ENCODE measurements at regions of chr13 and their contacts with region 1.

Region 1: DNA sequence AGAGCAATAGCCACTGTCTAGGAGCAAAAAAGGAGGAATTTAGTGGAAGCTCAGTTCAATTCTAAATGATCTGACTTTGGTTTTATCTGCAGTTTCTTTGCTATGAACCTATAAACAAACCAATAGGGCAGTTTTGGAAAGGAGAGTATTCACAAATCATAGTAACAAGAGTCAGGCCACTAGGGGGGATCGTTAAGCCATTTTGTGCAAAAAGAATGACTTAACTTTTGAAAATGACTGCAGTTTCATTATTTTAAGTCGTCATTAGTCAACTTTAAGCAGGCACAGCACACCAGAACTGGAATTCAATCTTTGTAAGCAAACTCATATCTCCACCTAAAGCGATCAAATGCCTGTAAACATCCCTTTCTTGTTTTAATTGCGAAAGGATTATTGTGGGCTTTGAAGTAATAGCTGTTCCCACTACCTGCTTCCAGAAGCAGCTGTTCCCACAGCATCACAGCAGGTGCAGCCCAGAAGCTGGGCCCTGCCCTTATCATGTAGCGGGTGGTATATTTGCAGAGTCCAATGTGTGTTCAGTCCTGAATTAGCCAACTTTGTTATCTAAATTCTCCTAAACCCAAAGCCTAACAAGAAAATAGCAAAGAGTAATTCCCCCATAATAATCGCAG is 51.5 kb downstream of the SOX21 start:
- DNase-seq: no peak
- H3K4me3 ChIP-seq: no peak overlapping the region
- H3K27ac ChIP-seq: no peak overlapping the region
- H3K27me3 ChIP-seq: peaks cover 35% of the 10 kb centered on the region
- CTCF ChIP-seq: peak; percentile 57

Region 2: DNA sequence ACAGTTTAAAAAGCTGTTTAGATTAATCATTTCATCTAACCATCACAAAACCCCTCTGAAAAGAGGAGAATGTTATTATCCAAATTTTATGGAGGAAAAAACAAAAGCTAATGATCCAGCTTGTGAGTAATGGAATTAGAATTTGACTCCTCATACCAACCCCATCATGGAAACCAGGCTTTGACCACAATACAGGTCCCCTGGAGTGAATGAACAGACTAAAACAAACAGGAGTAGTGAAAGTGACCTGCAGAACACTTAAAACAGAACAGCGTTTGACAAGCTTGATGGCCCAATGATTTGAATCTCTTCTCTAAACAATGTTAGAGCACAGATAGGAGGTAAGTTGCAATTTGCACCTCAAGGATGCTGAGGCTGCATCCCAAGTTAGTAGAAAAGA is 411.3 kb before region 1 on chr13:
- CTCF ChIA-PET with region 1: no interaction called
- POLR2A ChIA-PET with region 1: no interaction called
- DNase-seq: peak; percentile 42
- H3K4me3 ChIP-seq: no peak overlapping the region
- H3K27ac ChIP-seq: no peak overlapping the region
- H3K27me3 ChIP-seq: no peaks in the 10 kb centered on the region
- CTCF ChIP-seq: no peak

Region 3: GRCh38 chr13:94454906-94455305 is 205.9 kb before region 1 on chr13:
- CTCF ChIA-PET with region 1: no interaction called
- POLR2A ChIA-PET with region 1: no interaction called
- DNase-seq: no peak
- H3K4me3 ChIP-seq: no peak overlapping the region
- H3K27ac ChIP-seq: no peak overlapping the region
- H3K27me3 ChIP-seq: peaks cover 6% of the 10 kb centered on the region
- CTCF ChIP-seq: no peak

Region 4: GRCh38 chr13:94558716-94559115 is 102.1 kb before region 1 on chr13:
- CTCF ChIA-PET with region 1: no interaction called
- POLR2A ChIA-PET with region 1: no interaction called
- DNase-seq: no peak
- H3K4me3 ChIP-seq: no peak overlapping the region
- H3K27ac ChIP-seq: no peak overlapping the region
- H3K27me3 ChIP-seq: no peaks in the 10 kb centered on the region
- CTCF ChIP-seq: no peak

Region 5: DNA sequence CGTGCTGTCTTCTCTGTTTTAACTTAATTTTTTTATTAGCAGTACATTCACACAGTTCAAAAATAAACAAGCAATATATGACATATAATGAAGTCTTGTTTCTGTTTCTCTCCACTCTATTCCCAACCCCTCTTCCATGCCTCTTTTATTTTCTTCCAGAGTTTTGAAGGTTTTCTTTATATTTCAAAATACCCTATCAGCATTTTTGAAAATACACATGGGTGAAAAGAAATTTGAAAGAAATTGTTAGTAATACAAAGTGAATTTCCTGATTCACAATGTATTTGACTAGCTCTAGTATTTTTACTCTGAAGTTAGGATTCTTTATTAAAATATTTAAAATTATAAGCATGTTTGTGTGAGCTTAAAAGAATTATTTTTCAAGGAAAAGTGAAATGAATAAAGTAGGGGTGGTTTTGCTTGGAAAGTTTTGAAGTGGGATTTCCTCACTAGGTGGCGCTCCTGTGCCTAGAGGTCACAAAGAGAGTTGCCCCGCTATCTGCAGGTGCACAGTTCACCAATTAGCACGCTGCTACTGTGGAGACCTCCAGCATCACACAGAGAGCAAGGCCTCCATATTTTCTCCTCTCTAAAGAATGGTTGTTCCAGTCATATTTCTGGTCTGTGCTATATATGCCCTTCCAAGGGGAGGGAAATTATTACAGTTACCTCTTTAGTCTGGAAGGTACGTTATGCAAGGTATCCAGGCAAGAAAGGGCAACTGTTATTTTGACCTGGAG is 14.0 kb after region 1 on chr13:
- CTCF ChIA-PET with region 1: interaction called, 35 read pairs
- POLR2A ChIA-PET with region 1: no interaction called
- DNase-seq: no peak
- H3K4me3 ChIP-seq: no peak overlapping the region
- H3K27ac ChIP-seq: no peak overlapping the region
- H3K27me3 ChIP-seq: peaks cover 17% of the 10 kb centered on the region
- CTCF ChIP-seq: peak; percentile 76